ENCODE measurements at regions of chr16 and their contacts with region 1.

Region 1: GRCh38 chr16:27972500-27972899 is 91.0 kb downstream of the GSG1L start:
- DNase-seq: peak in 1 of 2 donors; percentile 63
- H3K4me3 ChIP-seq: no peak overlapping the region
- H3K27ac ChIP-seq: no peak overlapping the region
- H3K4me1 ChIP-seq: no peaks in the 10 kb centered on the region
- H3K27me3 ChIP-seq: no peaks in the 10 kb centered on the region
- CTCF ChIP-seq: peak; percentile 46 to 60 (median 48)

Region 2: DNA sequence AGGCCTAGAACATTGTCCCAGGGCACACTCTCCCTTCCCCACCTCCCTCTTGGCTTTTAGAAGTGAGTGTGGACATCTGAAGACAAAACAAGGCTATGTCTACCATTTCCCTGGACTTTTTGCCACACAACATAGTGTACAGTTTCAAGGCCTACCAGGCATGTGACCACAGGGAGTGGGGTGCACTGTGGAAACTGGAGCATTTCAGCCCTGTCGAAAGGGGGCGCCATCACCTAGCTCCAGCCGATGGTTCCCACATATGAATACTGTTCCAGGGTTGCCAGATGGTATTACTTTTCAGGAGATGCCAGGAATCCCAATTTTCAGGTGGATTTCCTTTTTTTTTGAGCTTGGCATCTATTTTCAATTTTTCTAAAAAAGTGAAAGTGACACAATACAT is 281.9 kb before region 1 on chr16:
- intact Hi-C with region 1: loop called (anchors 10 kb)
- DNase-seq: peak in 1 of 2 donors; percentile 42
- H3K4me3 ChIP-seq: no peak overlapping the region
- H3K27ac ChIP-seq: no peak overlapping the region
- H3K4me1 ChIP-seq: no peaks in the 10 kb centered on the region
- H3K27me3 ChIP-seq: no peaks in the 10 kb centered on the region
- CTCF ChIP-seq: peak in 2 of 3 experiments; percentile 30 to 50